ENCODE measurements at regions of chr4 and their contacts with region 1.

Region 1: DNA sequence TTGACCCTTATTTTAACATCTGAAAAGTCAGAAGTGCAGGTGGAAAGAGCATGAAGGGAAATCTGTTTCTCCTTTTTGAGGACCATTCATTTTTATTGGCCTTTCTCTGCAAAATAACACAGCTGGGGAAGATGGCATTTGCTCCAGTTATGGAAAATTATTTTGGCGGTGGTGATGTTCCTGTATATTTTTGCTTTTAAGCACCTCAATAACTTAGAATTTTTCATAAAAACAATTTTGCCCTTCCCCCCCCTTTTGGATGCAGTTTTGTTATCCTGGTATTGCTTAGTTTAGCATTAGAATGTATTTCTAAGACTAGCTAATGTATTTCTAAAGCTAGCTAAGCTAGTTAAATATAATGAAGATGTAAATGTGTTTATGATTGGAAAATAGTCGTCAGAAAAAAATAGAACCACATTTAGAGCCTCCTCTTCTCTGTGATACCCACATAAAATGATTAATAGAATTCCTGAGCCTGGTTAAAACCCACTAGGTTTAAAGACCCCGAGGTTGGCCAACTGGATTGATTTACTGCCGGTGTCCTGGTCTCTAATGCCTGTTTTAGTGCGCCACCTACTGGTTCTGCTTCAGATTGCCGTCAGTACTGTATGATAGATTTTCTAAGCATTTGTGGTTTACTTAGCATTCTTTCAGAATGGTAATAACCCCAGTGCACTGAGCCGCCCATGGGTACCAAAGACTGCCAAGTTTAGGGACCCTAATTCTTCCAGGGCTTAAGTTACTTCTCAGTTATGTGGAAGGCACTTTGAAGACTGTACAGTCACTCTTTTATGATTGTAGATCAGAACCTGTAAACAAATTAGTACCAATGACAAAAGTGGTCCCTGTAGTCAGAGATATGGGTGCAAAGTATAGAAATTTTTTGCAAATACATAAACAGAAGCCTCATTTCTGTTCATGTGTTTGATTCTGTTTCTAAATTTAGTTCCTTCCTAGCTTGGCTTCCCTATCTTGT is 11.4 kb downstream of the KLF3 start:
- DNase-seq: peak; percentile 77
- ATAC-seq: peak; percentile 13
- H3K4me3 ChIP-seq: peak overlapping the region in 2 of 3 experiments; percentile 26 to 57; a peak in 2 of 6 replicates
- H3K27ac ChIP-seq: peak overlapping the region; percentile 78
- H3K4me1 ChIP-seq: peaks cover 73% of the 10 kb centered on the region
- H3K27me3 ChIP-seq: no peaks in the 10 kb centered on the region
- CTCF ChIP-seq: peak; percentile 87
- EP300 ChIP-seq: no peak
- POLR2A ChIP-seq: no peak
- RAD21 ChIP-seq: peak; percentile 88

Region 2: GRCh38 chr4:38078590-38079421 is 596.6 kb before region 1 on chr4:
- CTCF ChIA-PET with region 1: no interaction called
- POLR2A ChIA-PET with region 1: no interaction called
- in situ Hi-C with region 1: loop called (anchors 5 kb)
- intact Hi-C with region 1: no loop called
- DNase-seq: peak; percentile 65
- ATAC-seq: peak; percentile 80
- H3K4me3 ChIP-seq: peak overlapping the region in 1 of 3 experiments; percentile 31; a peak in 1 of 6 replicates
- H3K27ac ChIP-seq: peak overlapping the region; percentile 97
- H3K4me1 ChIP-seq: peaks cover 93% of the 10 kb centered on the region
- H3K27me3 ChIP-seq: no peaks in the 10 kb centered on the region
- CTCF ChIP-seq: no peak
- EP300 ChIP-seq: no peak
- POLR2A ChIP-seq: peak in 1 of 2 experiments; percentile 55; a peak in 1 of 4 replicates
- RAD21 ChIP-seq: no peak

Region 3: DNA sequence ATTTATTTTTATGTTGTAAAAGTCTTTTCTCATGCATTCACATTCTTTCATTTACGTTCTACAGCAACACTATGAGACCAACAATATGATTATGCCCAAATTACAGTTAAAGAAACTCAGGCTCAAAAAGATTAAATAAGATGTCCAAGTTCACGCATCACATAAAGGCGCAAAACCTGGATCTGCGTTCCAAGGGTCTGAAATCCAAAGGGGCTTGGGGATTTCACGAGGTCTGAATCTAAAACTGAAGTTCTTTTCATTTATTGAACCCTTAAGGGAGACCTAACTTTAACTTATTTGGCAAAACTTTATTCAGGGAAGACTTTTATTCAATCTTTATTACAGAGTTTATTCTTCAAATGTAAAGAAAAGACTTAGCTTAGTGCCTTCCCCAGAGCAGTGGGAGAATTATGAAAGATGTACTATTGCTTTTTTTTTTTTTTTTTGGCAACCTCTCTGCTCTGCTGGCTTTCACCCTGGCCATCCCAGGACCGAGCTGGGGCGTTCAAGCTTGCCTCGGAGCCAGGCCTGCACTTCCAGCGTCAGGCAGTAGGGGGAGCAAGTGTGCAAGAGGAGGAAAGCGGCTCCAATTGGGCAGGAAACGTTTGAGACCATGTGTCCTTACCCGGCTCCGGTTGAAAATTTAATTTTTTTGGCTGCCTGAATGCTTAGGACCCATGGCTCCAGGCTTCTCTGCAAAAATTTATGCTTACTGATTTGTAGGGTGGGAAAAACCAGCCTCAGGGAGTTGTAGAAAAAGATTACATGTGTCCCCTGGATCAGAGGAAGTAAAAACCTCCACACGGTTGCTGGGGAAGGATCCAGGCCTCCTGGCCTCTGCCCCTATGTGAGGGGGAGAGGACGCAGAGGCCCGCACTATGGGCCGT is 355.7 kb before region 1 on chr4:
- CTCF ChIA-PET with region 1: interaction called, 10 read pairs
- POLR2A ChIA-PET with region 1: interaction called, 6 read pairs
- in situ Hi-C with region 1: loop called (anchors 5 kb)
- intact Hi-C with region 1: loop called (anchors 1 kb)
- DNase-seq: peak; percentile 75
- ATAC-seq: peak; percentile 86
- H3K4me3 ChIP-seq: 0 out of 6 replicates have a peak overlapping the region, but pooled peaks of 1 of the 3 experiments have one; percentile 8
- H3K27ac ChIP-seq: peak overlapping the region; percentile 28
- H3K4me1 ChIP-seq: peaks cover 33% of the 10 kb centered on the region
- H3K27me3 ChIP-seq: no peaks in the 10 kb centered on the region
- CTCF ChIP-seq: peak; percentile 95
- EP300 ChIP-seq: no peak
- POLR2A ChIP-seq: no peak
- RAD21 ChIP-seq: peak; percentile 93

Region 4: DNA sequence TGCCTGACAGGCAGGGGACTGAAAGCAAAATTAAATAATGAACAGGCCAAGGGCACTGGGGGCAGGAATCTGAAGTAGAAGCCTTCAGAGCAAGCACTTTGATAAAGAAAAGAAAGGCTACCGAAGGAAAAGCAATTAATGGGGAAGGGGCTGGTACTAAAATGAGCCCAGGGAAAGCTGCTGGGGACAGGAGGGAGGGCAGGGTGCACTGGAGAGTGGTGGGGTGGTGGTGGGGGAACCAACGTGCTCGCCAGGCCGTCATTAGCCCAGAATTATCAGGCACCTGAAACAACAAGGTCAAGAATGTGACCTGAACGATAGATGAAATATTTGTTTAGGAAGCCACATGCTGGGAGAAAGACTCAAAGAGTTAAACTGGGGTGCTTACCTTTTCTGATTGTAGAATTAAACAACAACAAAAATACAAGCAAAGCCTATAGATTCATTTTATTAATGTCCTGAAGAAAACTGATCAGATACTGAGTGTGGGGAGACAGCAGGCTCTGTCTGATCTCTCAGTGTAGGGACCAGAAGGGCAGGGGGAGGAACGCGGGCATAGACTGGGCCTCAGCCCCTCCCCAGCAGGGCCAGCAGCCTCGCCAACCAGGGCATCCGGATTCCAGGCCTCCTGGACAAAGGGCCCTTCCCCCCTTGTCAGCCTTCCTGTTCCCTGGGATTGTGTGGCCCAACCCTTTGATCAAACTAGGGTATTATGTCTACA is 251.1 kb before region 1 on chr4:
- CTCF ChIA-PET with region 1: no interaction called
- POLR2A ChIA-PET with region 1: no interaction called
- in situ Hi-C with region 1: no loop called
- intact Hi-C with region 1: loop called (anchors 10 kb)
- DNase-seq: peak; percentile 93
- ATAC-seq: peak; percentile 100
- H3K4me3 ChIP-seq: peak overlapping the region; percentile 3 to 38 (median 12); a peak in 3 of 6 replicates
- H3K27ac ChIP-seq: peak overlapping the region; percentile 81
- H3K4me1 ChIP-seq: peaks cover 44% of the 10 kb centered on the region
- H3K27me3 ChIP-seq: no peaks in the 10 kb centered on the region
- CTCF ChIP-seq: no peak
- EP300 ChIP-seq: peak in 1 of 2 experiments; percentile 65; a peak in 2 of 4 replicates
- POLR2A ChIP-seq: no peak
- RAD21 ChIP-seq: no peak; the same call in 1 of the 2 replicates

Region 5: DNA sequence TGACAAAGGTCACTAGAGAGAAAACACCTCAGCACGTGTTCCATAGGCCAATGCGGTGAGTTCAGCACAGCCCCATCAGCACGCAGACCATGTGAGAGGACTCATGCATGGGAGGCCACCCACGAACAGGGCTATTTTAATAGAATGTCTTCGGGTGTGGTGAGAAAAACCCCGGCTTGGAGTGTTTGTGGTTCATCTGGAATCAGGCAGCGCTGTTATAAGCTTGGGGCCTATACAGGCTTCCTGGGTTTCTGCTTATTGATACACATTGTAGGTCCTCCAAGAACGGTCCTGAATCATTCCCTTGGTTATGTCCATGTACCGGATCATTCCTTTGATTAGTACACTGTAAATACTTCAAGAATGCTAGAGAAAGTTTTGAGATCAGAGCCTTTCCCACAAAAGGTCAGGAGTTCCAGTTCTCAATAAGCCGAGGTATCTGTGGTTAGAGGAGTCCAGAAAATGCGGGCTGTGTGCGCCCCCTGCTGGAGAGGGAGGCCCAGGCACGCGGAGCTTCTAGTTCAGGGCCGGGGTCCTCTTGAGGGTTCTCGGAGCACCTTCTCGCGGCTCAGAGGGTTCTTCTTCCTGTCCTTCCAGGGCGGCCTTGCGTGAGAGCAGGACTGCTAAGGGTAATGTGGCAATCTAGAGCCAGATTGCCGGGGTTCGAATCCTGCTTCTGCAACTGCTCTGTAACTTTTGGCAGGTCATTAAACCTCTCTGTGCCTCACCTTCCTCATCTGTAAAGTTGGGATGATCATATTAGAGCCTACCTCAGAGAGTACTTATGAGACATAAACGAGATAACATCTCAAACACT is 55.6 kb after region 1 on chr4:
- CTCF ChIA-PET with region 1: no interaction called
- POLR2A ChIA-PET with region 1: interaction called, 3 read pairs
- in situ Hi-C with region 1: no loop called
- intact Hi-C with region 1: loop called (anchors 5 kb)
- DNase-seq: peak; percentile 66
- ATAC-seq: peak; percentile 93
- H3K4me3 ChIP-seq: peak overlapping the region in 1 of 3 experiments; percentile 30; a peak in 1 of 6 replicates
- H3K27ac ChIP-seq: no peak overlapping the region
- H3K4me1 ChIP-seq: peaks cover 27% of the 10 kb centered on the region
- H3K27me3 ChIP-seq: no peaks in the 10 kb centered on the region
- CTCF ChIP-seq: peak; percentile 95
- EP300 ChIP-seq: no peak
- POLR2A ChIP-seq: no peak
- RAD21 ChIP-seq: peak; percentile 89